ENCODE measurements at regions of chr7 and their contacts with region 1.

Region 1: DNA sequence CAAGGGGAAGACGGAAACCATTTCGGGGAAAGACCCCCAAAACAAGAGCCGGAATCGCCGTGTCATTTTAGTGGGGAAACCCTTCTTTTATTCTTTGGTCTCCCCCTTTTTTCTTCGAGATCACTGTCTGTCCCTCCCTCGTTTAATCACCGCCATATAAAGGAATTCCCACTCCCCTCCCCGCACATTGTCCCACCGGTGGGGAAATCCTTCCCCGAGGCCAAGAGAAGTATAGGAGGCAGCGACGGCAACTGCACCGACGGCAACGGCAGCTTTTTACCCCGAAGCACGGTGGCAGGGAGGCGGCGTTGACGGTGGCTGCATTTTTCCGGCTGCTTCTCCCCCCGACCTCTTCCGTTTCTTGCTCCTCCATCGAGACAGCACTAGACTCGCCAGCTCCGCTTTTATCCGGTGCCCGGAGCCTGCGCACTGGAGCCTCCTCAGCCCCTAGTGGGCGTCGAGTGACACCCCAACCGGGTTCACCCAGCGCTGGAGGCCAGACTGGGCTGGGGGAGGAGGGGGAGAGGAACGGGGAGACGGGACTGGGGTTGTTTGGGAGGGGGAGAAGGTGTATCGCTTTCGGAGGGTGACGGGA is 687 bp upstream of the KMT2E start:
- DNase-seq: peak; percentile 93 to 98 (median 96)
- ATAC-seq: peak; percentile 68
- H3K4me3 ChIP-seq: peak overlapping the region; percentile 99
- H3K4me3 Mint-ChIP-seq: peak overlapping the region; percentile 96 to 100 (median 98)
- H3K27ac ChIP-seq: peak overlapping the region; percentile 97
- H3K27ac Mint-ChIP-seq: peak overlapping the region; percentile 99 to 100 (median 100)
- H3K4me1 ChIP-seq: peaks cover 14 to 24% of the 10 kb centered on the region in 2 donors
- H3K4me1 Mint-ChIP-seq: peaks cover 31 to 50% (median 41%) of the 10 kb centered on the region in 7 donors
- H3K27me3 ChIP-seq: no peaks in the 10 kb centered on the region
- H3K27me3 Mint-ChIP-seq: peaks cover 0 to 8% (median 0%) of the 10 kb centered on the region in 5 donors

Region 2: GRCh38 chr7:103296901-103297836 is 1716.1 kb before region 1 on chr7 and contains the start of gene PMPCB:
- CTCF ChIA-PET with region 1: no interaction called
- POLR2A ChIA-PET with region 1: no interaction called
- intact Hi-C with region 1: loop called in 1 of 2 experiments (anchors 1 kb)
- DNase-seq: peak; percentile 87 to 95 (median 94)
- ATAC-seq: peak; percentile 100
- H3K4me3 ChIP-seq: peak within 1 kb of the TSS; percentile 80
- H3K4me3 Mint-ChIP-seq: peak within 1 kb of the TSS; percentile 83 to 96 (median 90)
- H3K27ac ChIP-seq: peak within 1 kb of the TSS; percentile 90
- H3K27ac Mint-ChIP-seq: peak within 1 kb of the TSS; percentile 80 to 94 (median 92)
- H3K4me1 ChIP-seq: peaks cover 16 to 19% of the 10 kb centered on the region in 2 donors
- H3K4me1 Mint-ChIP-seq: peaks cover 18 to 50% (median 36%) of the 10 kb centered on the region in 7 donors
- H3K27me3 ChIP-seq: no peaks in the 10 kb centered on the region
- H3K27me3 Mint-ChIP-seq: peaks cover 0 to 9% (median 0%) of the 10 kb centered on the region in 5 donors
- total RNA-seq, gene PMPCB: 55.2 to 94.1 (median 68.3) TPM

Region 3: GRCh38 chr7:103962070-103962469 is 1051.2 kb before region 1 on chr7:
- CTCF ChIA-PET with region 1: no interaction called
- POLR2A ChIA-PET with region 1: no interaction called
- intact Hi-C with region 1: no loop called
- DNase-seq: no peak
- ATAC-seq: no peak
- H3K4me3 ChIP-seq: no peak overlapping the region
- H3K4me3 Mint-ChIP-seq: no peak overlapping the region
- H3K27ac ChIP-seq: no peak overlapping the region
- H3K27ac Mint-ChIP-seq: no peak overlapping the region
- H3K4me1 ChIP-seq: no peaks in the 10 kb centered on the region
- H3K4me1 Mint-ChIP-seq: no peaks in the 10 kb centered on the region
- H3K27me3 ChIP-seq: no peaks in the 10 kb centered on the region
- H3K27me3 Mint-ChIP-seq: peaks cover 0 to 48% (median 17%) of the 10 kb centered on the region in 5 donors

Region 4: DNA sequence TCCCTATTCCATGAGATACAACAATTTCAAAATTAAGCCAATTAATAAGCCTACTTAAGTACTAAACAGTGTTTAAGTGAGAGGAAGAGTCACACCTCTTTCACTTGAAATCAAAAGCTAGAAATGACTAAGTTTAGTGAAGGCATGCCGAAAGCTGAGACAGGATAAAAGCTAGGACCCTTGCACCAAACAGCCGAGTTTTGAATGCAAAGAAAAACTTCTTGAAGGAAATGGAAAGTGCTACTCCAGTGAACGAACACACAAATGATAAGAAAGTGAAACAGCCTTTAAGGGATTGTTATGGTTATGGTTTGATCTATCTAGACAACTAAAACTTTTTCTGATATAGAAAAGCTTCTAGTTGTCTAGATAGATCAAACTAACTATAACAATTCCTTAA is 134.7 kb before region 1 on chr7:
- CTCF ChIA-PET with region 1: no interaction called
- POLR2A ChIA-PET with region 1: no interaction called
- intact Hi-C with region 1: no loop called
- DNase-seq: no peak
- ATAC-seq: no peak
- H3K4me3 ChIP-seq: no peak overlapping the region
- H3K4me3 Mint-ChIP-seq: peak overlapping the region in 2 of 10 donors; percentile 33 to 48
- H3K27ac ChIP-seq: no peak overlapping the region
- H3K27ac Mint-ChIP-seq: peak overlapping the region in 3 of 9 donors; percentile 40 to 75 (median 52)
- H3K4me1 ChIP-seq: no peaks in the 10 kb centered on the region
- H3K4me1 Mint-ChIP-seq: peaks cover 4 to 21% (median 8%) of the 10 kb centered on the region in 7 donors
- H3K27me3 ChIP-seq: no peaks in the 10 kb centered on the region
- H3K27me3 Mint-ChIP-seq: peaks cover 0 to 2% (median 0%) of the 10 kb centered on the region in 5 donors

Region 5: DNA sequence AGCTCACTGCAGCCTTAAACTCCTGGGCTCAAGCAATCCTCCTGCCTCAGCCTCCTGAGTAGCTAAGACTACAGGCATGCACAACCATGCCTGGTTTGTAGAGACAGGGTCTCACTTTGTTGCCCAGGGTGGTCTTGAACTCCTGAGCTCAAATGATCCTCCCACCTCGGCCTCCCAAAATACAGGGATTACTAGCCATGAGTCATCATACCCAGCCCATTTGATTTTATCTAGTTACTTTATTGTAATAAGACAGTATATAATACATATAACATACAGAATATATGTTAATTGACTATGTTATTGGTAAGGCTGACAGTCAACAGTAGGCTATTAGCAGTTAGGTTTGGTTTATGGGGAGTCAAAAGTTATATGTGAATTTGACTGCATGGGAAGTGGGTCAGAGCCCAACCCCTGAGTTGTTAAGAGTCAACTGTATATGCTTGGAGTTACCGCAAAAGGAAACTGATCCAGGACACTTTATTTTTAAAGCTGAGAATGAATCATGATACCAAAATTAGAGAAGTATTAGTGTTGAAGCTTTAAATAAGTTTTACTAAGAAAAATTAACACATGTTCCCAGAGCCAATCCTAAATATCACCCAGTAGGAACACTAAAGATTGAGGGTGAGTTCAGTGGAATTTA is 20.0 kb before region 1 on chr7:
- CTCF ChIA-PET with region 1: interaction called, 4 read pairs
- POLR2A ChIA-PET with region 1: interaction called, 639 read pairs
- intact Hi-C with region 1: no loop called
- DNase-seq: no peak
- ATAC-seq: no peak
- H3K4me3 ChIP-seq: no peak overlapping the region
- H3K4me3 Mint-ChIP-seq: peak overlapping the region in 1 of 10 donors; percentile 65
- H3K27ac ChIP-seq: no peak overlapping the region
- H3K27ac Mint-ChIP-seq: peak overlapping the region in 7 of 9 donors; percentile 12 to 90 (median 72)
- H3K4me1 ChIP-seq: peaks cover 7 to 46% of the 10 kb centered on the region in 2 donors
- H3K4me1 Mint-ChIP-seq: peaks cover 25 to 71% (median 59%) of the 10 kb centered on the region in 7 donors
- H3K27me3 ChIP-seq: no peaks in the 10 kb centered on the region
- H3K27me3 Mint-ChIP-seq: no peaks in the 10 kb centered on the region

Region 6: DNA sequence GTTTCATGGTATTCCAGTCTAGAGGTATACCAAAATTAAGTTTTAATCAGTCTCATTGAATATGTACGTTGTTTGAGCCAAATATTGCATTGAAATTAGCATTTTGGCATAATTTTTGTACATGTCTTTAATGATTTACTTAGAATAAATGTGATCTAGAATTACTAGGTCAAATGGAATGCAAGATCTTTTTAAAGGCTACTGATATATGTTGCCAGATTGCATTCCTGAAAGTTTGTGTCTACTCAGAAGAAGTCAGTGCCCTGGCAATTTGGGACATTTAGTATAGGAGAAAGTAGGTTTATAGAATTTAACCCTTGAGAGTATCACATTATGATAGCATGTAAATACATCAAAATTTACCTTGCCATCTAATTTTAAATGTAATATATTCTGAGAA is 33.1 kb after region 1 on chr7:
- CTCF ChIA-PET with region 1: no interaction called
- POLR2A ChIA-PET with region 1: interaction called, 44 read pairs
- intact Hi-C with region 1: loop called (anchors 1 to 2 kb)
- DNase-seq: no peak
- ATAC-seq: no peak
- H3K4me3 ChIP-seq: no peak overlapping the region
- H3K4me3 Mint-ChIP-seq: peak overlapping the region in 1 of 10 donors; percentile 44
- H3K27ac ChIP-seq: no peak overlapping the region
- H3K27ac Mint-ChIP-seq: peak overlapping the region in 6 of 9 donors; percentile 6 to 71 (median 42)
- H3K4me1 ChIP-seq: peaks cover 9 to 10% of the 10 kb centered on the region in 2 donors
- H3K4me1 Mint-ChIP-seq: peaks cover 32 to 76% (median 59%) of the 10 kb centered on the region in 7 donors
- H3K27me3 ChIP-seq: no peaks in the 10 kb centered on the region
- H3K27me3 Mint-ChIP-seq: no peaks in the 10 kb centered on the region

Region 7: GRCh38 chr7:105268511-105269392 is 255.4 kb after region 1 on chr7:
- CTCF ChIA-PET with region 1: no interaction called
- POLR2A ChIA-PET with region 1: interaction called, 3 read pairs
- intact Hi-C with region 1: loop called in 1 of 2 experiments (anchors 2 kb)
- DNase-seq: peak in 6 of 9 donors; percentile 30 to 58 (median 46)
- ATAC-seq: peak; percentile 83
- H3K4me3 ChIP-seq: peak overlapping the region; percentile 51
- H3K4me3 Mint-ChIP-seq: peak overlapping the region; percentile 85 to 100 (median 94)
- H3K27ac ChIP-seq: peak overlapping the region; percentile 69
- H3K27ac Mint-ChIP-seq: peak overlapping the region; percentile 81 to 96 (median 91)
- H3K4me1 ChIP-seq: peaks cover 13 to 25% of the 10 kb centered on the region in 2 donors
- H3K4me1 Mint-ChIP-seq: peaks cover 34 to 84% (median 71%) of the 10 kb centered on the region in 7 donors
- H3K27me3 ChIP-seq: no peaks in the 10 kb centered on the region
- H3K27me3 Mint-ChIP-seq: no peaks in the 10 kb centered on the region

Region 8: DNA sequence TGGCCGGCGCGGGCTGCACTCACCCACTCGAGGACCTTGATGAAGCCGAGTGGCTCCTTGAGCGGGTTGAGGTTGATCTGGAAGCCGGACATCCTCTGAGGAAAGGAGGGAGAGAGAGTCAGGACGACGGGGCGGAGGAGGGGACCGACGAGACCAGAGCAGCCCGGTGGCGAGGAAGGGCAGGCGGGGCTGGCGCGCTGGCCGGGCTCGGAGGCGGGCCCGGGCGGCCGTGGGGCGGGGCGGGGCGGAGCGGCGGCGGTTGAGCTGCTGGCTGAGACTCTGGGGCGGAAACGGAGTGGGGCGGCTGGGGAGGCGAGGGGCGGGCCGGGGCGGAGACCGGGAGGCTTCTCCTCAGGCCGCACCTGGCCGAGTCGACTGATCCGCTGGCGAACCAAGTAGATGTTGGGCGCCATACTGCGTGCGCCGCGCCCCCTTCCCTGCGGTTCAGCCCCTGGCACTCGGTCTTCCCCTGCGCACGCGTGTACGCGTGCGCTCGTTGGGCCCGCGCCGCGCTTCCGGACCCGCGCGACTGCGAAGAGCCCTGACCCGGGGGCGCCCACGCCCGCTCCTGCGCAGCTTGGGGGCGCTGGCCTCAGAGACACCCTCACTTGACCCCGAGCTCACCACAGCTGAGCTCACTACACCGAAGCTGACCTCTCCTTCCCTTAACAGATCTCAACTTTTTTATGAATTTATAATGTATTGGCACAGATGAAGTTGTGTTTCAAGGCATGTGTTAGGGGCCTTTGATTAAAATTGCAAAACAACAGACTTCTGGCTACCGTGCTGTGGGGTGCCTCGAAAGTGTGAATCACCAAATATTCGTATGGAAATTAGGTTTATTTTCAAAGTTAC is 1099.0 kb after region 1 on chr7 and contains the start of gene SYPL1:
- CTCF ChIA-PET with region 1: no interaction called
- POLR2A ChIA-PET with region 1: interaction called, 9 read pairs
- intact Hi-C with region 1: loop called in 1 of 2 experiments (anchors 2 kb)
- DNase-seq: peak; percentile 91 to 95 (median 93)
- ATAC-seq: peak; percentile 93
- H3K4me3 ChIP-seq: peak within 1 kb of the TSS; percentile 70
- H3K4me3 Mint-ChIP-seq: peak within 1 kb of the TSS; percentile 78 to 97 (median 92)
- H3K27ac ChIP-seq: peak within 1 kb of the TSS; percentile 83
- H3K27ac Mint-ChIP-seq: peak within 1 kb of the TSS; percentile 90 to 99 (median 96)
- H3K4me1 ChIP-seq: peaks cover 14 to 64% of the 10 kb centered on the region in 2 donors
- H3K4me1 Mint-ChIP-seq: peaks cover 45 to 82% (median 71%) of the 10 kb centered on the region in 7 donors
- H3K27me3 ChIP-seq: no peaks in the 10 kb centered on the region
- H3K27me3 Mint-ChIP-seq: peaks cover 0 to 4% (median 0%) of the 10 kb centered on the region in 5 donors
- total RNA-seq, gene SYPL1: 37.5 to 54.0 (median 46.6) TPM

Measured in naive thymus-derived CD4-positive, alpha-beta T cell (primary cell).